ENCODE measurements at regions of chr12 and their contacts with region 1.

Region 1: GRCh38 chr12:98516184-98516873 is 939 bp downstream of the TMPO start:
- DNase-seq: peak; percentile 95
- ATAC-seq: peak; percentile 75
- H3K4me3 Mint-ChIP-seq: peak overlapping the region; percentile 96
- H3K27ac Mint-ChIP-seq: peak overlapping the region; percentile 100
- H3K4me1 Mint-ChIP-seq: peaks cover 27% of the 10 kb centered on the region
- H3K27me3 Mint-ChIP-seq: no peaks in the 10 kb centered on the region
- CTCF ChIP-seq: peak; percentile 30

Region 2: DNA sequence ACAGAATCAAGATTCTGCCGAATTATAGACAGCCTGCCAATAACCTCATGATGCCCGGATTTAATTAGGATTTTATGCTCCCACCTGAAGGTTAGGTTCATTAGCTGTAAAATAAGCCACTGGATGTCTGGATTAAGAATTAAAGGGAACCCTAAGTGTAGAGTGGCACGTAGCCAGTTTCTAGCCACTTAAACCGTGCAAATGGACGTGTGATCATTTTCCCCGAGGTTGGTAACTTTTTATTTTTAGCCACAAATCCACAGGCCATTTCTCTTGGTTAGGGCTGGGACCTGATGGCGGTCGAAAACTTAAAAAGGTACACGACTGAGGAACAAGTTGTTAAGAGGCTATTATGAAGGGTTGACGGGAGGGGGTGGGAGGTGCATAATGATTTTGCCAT is 128.2 kb before region 1 on chr12:
- CTCF ChIA-PET with region 1: no interaction called
- POLR2A ChIA-PET with region 1: no interaction called
- intact Hi-C with region 1: no loop called
- DNase-seq: no peak
- ATAC-seq: no peak
- H3K4me3 Mint-ChIP-seq: no peak overlapping the region
- H3K27ac Mint-ChIP-seq: no peak overlapping the region
- H3K4me1 Mint-ChIP-seq: no peaks in the 10 kb centered on the region
- H3K27me3 Mint-ChIP-seq: peaks cover 2% of the 10 kb centered on the region
- CTCF ChIP-seq: no peak

Region 3: DNA sequence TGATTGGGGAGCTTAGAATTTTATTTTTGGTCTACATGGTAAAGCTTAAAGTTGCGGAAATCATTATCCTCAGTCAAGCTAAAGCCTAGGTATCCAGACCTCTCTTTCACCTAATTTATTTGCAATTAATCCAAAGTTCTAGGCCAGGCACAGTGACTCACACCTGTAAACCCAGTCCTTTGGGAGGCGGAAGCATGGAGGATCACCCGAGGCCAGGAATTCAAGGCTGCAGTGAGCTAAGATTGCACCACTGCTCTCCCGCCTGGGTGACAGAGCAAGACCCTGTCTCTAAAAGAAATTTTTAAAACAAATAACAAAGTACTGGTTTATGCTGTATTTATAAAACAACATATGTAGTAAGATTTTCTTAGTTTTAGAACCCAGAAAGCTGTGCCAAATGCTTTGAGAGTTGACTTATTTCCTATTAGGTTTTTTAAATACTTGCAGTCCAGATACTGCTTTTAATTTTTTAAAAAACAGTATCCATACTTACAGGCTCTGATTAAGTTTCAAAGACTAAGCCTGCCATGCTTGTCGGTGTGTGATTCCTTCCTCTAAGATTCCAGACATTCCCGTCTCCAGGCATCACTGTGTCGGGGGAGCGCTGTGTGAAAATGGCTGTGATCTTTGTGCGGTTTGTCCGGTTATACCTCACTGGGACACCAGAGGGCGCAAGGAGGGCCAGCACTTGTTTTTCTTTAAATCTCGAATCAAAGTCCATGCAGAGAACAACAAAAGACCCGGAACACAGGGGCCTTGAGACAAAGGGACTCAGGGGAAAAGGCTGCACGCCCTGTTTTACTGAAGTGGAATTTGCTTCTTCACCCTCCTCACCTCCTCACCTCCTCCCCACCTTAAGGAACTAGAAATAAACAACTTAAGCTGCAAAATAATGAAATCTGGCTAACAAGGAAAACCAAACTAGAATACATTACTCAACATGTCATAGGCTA is 25.6 kb before region 1 on chr12:
- CTCF ChIA-PET with region 1: interaction called, 60 read pairs
- POLR2A ChIA-PET with region 1: interaction called, 37 read pairs
- intact Hi-C with region 1: loop called (anchors 2 kb)
- DNase-seq: peak; percentile 90
- ATAC-seq: peak; percentile 97
- H3K4me3 Mint-ChIP-seq: peak overlapping the region; percentile 34
- H3K27ac Mint-ChIP-seq: peak overlapping the region; percentile 88
- H3K4me1 Mint-ChIP-seq: peaks cover 7% of the 10 kb centered on the region
- H3K27me3 Mint-ChIP-seq: no peaks in the 10 kb centered on the region
- CTCF ChIP-seq: peak; percentile 85

Region 4: GRCh38 chr12:98503592-98504367 is 12.5 kb before region 1 on chr12:
- CTCF ChIA-PET with region 1: interaction called, 17 read pairs
- POLR2A ChIA-PET with region 1: interaction called, 86 read pairs
- intact Hi-C with region 1: loop called (anchors 1 kb)
- DNase-seq: peak; percentile 96
- ATAC-seq: peak; percentile 88
- H3K4me3 Mint-ChIP-seq: peak overlapping the region; percentile 95
- H3K27ac Mint-ChIP-seq: peak overlapping the region; percentile 100
- H3K4me1 Mint-ChIP-seq: peaks cover 31% of the 10 kb centered on the region
- H3K27me3 Mint-ChIP-seq: peaks cover 6% of the 10 kb centered on the region
- CTCF ChIP-seq: no peak

Region 5: DNA sequence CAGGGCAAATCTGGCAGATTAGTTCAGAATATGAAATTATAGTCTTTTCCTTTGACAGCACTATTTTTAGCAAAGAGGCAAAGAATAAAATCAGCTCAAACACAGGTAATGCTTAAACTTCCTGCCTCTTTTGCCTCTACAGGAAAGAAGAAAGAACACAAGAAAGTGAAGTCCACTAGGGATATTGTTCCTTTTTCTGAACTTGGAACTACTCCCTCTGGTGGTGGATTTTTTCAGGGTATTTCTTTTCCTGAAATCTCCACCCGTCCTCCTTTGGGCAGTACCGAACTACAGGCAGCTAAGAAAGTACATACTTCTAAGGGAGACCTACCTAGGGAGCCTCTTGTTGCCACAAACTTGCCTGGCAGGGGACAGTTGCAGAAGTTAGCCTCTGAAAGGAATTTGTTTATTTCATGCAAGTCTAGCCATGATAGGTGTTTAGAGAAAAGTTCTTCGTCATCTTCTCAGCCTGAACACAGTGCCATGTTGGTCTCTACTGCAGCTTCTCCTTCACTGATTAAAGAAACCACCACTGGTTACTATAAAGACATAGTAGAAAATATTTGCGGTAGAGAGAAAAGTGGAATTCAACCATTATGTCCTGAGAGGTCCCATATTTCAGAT is 16.5 kb after region 1 on chr12:
- CTCF ChIA-PET with region 1: interaction called, 34 read pairs
- POLR2A ChIA-PET with region 1: interaction called, 21 read pairs
- intact Hi-C with region 1: no loop called
- DNase-seq: no peak
- ATAC-seq: peak; percentile 24
- H3K4me3 Mint-ChIP-seq: no peak overlapping the region
- H3K27ac Mint-ChIP-seq: peak overlapping the region; percentile 12
- H3K4me1 Mint-ChIP-seq: peaks cover 23% of the 10 kb centered on the region
- H3K27me3 Mint-ChIP-seq: no peaks in the 10 kb centered on the region
- CTCF ChIP-seq: peak; percentile 73

Region 6: GRCh38 chr12:98538031-98538430 is 21.7 kb after region 1 on chr12:
- CTCF ChIA-PET with region 1: interaction called, 34 read pairs
- POLR2A ChIA-PET with region 1: interaction called, 21 read pairs
- intact Hi-C with region 1: no loop called
- DNase-seq: no peak
- ATAC-seq: no peak
- H3K4me3 Mint-ChIP-seq: no peak overlapping the region
- H3K27ac Mint-ChIP-seq: no peak overlapping the region
- H3K4me1 Mint-ChIP-seq: peaks cover 23% of the 10 kb centered on the region
- H3K27me3 Mint-ChIP-seq: no peaks in the 10 kb centered on the region
- CTCF ChIP-seq: no peak

Region 7: GRCh38 chr12:98593351-98594049 is 77.2 kb after region 1 on chr12 and contains the start of gene SLC25A3:
- CTCF ChIA-PET with region 1: no interaction called
- POLR2A ChIA-PET with region 1: interaction called, 70 read pairs
- intact Hi-C with region 1: loop called (anchors 5 kb)
- DNase-seq: peak; percentile 94
- ATAC-seq: peak; percentile 97
- H3K4me3 Mint-ChIP-seq: peak within 1 kb of the TSS; percentile 98
- H3K27ac Mint-ChIP-seq: peak within 1 kb of the TSS; percentile 97
- H3K4me1 Mint-ChIP-seq: peaks cover 28% of the 10 kb centered on the region
- H3K27me3 Mint-ChIP-seq: no peaks in the 10 kb centered on the region
- CTCF ChIP-seq: no peak
- total RNA-seq, gene SLC25A3: 665 to 672 TPM